Activated naive CD4-positive, alpha-beta T cell treated with anti-CD3 and anti-CD28 coated beads for 36 hours (primary cell): ENCODE measurements at regions of chr19 and their contacts with region 1.

Region 1: DNA sequence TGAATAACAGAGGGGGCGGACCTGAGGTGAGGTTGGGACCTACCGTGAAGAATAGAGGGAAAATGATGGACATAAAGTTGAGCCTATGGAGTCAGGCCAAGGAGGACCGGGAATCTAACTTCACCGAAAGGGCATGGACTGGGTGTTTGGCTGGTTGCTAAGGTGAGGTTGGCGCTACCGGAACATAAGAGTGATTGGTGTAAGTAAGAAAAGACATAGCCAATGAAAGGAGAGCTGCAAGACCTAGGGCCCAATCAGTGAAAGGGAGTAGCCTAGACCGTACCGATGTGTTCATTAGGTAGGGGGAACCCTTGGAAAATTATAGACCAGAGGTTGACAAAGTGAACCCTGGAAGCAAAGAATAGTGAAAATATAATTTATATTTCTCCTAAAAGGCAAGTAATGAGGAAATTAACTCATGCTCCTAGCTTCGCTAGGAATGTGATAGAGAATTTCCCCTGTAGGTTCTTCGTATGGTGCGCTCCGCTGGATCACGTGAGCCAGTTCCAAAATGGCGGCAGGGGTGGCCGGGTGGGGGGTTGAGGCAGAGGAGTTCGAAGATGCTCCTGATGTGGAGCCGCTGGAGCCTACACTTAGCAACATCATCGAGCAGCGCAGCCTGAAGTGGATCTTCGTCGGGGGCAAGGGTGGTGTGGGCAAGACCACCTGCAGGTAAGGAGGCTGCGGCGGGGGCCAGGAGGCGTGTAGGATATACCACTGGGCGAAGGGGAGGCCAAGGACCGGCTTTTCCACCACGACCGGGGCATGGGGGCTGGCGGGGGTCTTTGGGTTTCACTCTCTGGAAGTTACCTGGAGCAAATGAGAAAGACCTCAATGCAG is at the start of gene GET3:
- DNase-seq: peak; percentile 90
- H3K4me3 Mint-ChIP-seq: peak within 1 kb of the TSS; percentile 100
- H3K27ac Mint-ChIP-seq: peak within 1 kb of the TSS; percentile 90
- H3K4me1 Mint-ChIP-seq: peaks cover 31% of the 10 kb centered on the region
- H3K27me3 Mint-ChIP-seq: no peaks in the 10 kb centered on the region
- total RNA-seq, gene GET3: 47.7 TPM

Region 2: DNA sequence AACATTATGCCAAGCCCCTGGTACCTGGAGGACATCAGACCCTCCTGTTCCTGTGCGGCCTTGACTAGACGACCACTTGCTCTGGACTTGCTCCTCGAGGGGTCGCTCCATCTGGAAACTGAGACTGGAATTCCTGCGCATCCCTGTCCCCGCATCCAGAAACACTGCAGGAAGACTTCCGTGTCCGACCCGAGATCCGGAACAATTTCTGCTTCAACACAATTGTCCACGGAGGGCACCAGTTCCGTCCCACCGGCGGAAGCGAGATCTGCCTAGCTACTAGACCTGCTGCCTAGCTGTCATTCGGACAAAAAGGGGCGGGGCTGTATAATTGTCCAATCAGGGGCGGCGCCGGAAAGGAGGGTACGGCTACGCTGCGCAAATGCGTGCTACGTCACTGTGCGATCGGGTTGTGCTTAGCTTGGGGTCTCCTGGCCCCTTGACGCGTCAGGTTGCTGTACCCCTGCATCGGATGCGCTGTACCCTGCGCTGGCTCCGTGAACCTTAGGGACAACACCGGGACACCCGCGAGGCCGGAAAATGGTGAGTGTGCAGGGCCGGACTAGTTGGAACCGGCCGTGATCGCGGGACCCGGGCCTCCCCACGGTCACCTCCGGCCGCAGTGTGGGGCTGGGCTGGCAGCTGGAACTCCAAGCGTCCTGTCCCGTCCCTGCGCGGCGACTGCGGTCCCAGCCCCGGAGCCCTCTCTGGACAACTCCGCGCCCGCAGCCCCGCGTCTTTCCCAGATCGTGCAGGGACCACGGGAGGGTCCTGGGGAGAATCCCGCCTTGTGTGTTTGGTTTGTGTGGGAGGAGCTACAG is 126.5 kb before region 1 on chr19 and contains the starts of genes ZNF490 and ZNF791:
- CTCF ChIA-PET with region 1: interaction called, 3 read pairs
- intact Hi-C with region 1: loop called (anchors 5 kb)
- DNase-seq: peak; percentile 99
- H3K4me3 Mint-ChIP-seq: peak within 1 kb of the TSS; percentile 100
- H3K27ac Mint-ChIP-seq: peak within 1 kb of the TSS; percentile 95
- H3K4me1 Mint-ChIP-seq: peaks cover 43% of the 10 kb centered on the region
- H3K27me3 Mint-ChIP-seq: no peaks in the 10 kb centered on the region
- total RNA-seq, gene ZNF490: 3.9 to 5.0 TPM
- total RNA-seq, gene ZNF791: 11.2 to 11.9 TPM

Region 3: DNA sequence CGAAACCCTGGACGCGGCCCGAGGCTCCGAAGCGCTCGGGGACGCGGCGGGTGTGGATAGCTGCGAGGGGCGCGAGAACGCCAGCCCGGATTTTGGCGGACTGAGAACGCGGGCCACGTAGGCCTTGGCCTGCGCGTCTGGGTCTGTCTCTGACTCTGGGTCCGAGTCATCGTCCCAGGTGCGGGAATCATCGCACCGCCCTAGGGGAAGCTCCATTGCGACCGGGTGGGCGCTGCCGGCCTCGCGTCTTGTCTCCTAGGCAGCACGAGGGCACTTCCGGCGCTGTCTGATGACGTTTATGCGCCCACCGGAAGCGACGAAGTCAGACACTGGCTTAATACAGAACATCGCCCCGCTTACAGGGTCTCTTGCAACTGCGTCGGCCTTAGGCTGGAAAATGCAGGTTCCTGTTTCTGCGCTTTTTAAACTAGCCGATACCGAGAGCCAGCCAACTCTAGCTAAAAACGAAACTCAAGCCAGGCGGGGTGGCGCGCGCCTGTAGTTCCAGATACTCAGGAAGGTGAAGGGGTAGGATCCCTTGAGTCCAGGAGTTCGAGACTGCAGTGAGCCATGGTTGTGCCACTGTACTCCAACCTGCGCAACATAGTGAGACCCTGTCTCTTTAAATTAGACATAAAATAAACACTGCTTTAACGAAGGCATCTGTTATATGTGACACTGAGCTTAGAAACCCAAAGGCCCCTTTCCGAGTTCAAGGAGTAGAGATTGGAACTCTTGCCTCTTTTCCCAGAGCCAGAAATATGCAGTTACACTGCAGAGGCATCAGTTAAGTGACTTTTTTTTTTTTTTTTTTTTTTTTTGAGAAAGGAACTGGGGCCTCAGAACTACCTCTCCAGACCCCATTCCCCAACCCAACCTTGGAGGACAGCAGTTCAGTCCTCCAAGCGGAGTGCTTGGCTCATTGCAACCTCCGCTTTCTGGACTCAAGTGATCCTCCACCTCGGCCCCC is 40.6 kb before region 1 on chr19 and contains the start of gene FBXW9:
- CTCF ChIA-PET with region 1: interaction called, 3 read pairs
- intact Hi-C with region 1: loop called (anchors 2 kb)
- DNase-seq: peak; percentile 98
- H3K4me3 Mint-ChIP-seq: peak within 1 kb of the TSS; percentile 91
- H3K27ac Mint-ChIP-seq: peak within 1 kb of the TSS; percentile 91
- H3K4me1 Mint-ChIP-seq: peaks cover 11% of the 10 kb centered on the region
- H3K27me3 Mint-ChIP-seq: no peaks in the 10 kb centered on the region
- total RNA-seq, gene FBXW9: 7.2 to 8.7 TPM

Region 4: DNA sequence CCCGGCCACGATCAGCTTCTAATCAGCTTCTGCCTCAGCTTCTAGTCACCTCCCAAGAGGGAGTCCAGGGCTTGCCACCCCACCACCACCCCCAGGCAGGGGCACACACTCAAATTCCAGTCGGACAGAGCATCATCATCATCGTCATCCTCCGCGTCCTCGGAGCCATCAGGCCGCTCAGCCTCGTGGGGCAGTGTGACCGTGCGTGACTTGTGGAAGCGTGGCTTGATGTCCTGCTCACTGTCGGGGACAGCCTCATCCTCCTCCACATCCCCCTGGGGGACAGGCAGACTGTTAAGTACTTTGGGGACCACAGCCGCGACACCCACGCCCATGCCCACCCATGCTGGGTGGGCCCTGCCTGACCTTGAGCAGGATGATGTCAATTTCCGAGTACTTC is 26.0 kb before region 1 on chr19:
- CTCF ChIA-PET with region 1: no interaction called
- intact Hi-C with region 1: no loop called
- DNase-seq: no peak
- H3K4me3 Mint-ChIP-seq: no peak overlapping the region
- H3K27ac Mint-ChIP-seq: no peak overlapping the region
- H3K4me1 Mint-ChIP-seq: no peaks in the 10 kb centered on the region
- H3K27me3 Mint-ChIP-seq: no peaks in the 10 kb centered on the region

Region 5: GRCh38 chr19:12722566-12723380 is 14.4 kb before region 1 on chr19:
- CTCF ChIA-PET with region 1: interaction called, 14 read pairs
- intact Hi-C with region 1: loop called (anchors 1 kb)
- DNase-seq: peak; percentile 97
- H3K4me3 Mint-ChIP-seq: peak overlapping the region; percentile 79
- H3K27ac Mint-ChIP-seq: peak overlapping the region; percentile 78
- H3K4me1 Mint-ChIP-seq: peaks cover 33% of the 10 kb centered on the region
- H3K27me3 Mint-ChIP-seq: no peaks in the 10 kb centered on the region

Region 6: DNA sequence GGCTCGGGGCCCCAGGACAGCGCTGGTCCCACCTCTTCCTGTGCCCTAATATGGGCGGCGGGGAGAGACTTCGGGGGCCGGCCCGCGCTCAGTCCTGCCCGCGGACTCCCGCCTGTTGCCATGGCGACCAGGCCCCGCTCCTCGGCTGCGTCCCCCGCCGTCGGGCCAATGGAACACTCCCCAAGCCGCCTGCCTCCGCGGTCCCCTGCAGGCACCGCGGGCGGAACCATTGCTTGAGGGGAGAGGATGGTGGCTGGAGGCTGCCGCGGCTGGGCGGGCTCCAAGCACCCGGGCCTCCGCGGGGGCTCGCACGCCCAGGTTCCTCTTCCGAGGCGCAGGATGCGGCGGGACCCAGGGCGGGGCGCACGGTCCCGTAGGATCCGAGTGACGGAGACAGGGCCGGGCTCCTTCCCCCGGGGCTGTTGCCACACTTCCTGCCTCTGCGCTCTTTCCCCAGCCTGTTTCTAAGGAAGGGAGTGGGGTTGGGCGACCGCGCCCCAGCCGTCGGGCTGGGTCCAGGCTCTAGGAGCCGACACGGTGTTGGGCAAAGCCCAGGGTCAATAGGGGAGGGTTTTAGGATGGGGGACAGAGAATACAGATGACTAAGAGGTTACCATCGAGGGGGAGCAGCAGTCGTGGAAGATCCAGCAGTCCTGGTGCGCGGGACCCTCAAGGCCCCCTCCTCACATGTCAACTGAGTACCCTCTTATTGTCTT is 52.8 kb after region 1 on chr19:
- CTCF ChIA-PET with region 1: interaction called, 17 read pairs
- intact Hi-C with region 1: loop called (anchors 1 kb)
- DNase-seq: peak; percentile 97
- H3K4me3 Mint-ChIP-seq: peak overlapping the region; percentile 97
- H3K27ac Mint-ChIP-seq: peak overlapping the region; percentile 96
- H3K4me1 Mint-ChIP-seq: peaks cover 25% of the 10 kb centered on the region
- H3K27me3 Mint-ChIP-seq: no peaks in the 10 kb centered on the region

Region 7: GRCh38 chr19:12796146-12797071 is 59.2 kb after region 1 on chr19:
- CTCF ChIA-PET with region 1: interaction called, 17 read pairs
- intact Hi-C with region 1: loop called (anchors 1 kb)
- DNase-seq: peak; percentile 84
- H3K4me3 Mint-ChIP-seq: peak overlapping the region; percentile 67
- H3K27ac Mint-ChIP-seq: peak overlapping the region; percentile 74
- H3K4me1 Mint-ChIP-seq: peaks cover 40% of the 10 kb centered on the region
- H3K27me3 Mint-ChIP-seq: no peaks in the 10 kb centered on the region